IMR-90 (cell line): ENCODE measurements at regions of chr9 and their contacts with region 1.

Region 1: GRCh38 chr9:37209431-37210386 is 89.3 kb downstream of the ZCCHC7 start:
- DNase-seq: no peak
- ATAC-seq: no peak
- H3K4me3 ChIP-seq: no peak overlapping the region
- H3K27ac ChIP-seq: no peak overlapping the region
- H3K4me1 ChIP-seq: no peaks in the 10 kb centered on the region
- H3K27me3 ChIP-seq: no peaks in the 10 kb centered on the region
- CTCF ChIP-seq: no peak
- POLR2A ChIP-seq: no peak
- RAD21 ChIP-seq: no peak

Region 2: GRCh38 chr9:37251452-37251851 is 41.7 kb after region 1 on chr9:
- CTCF ChIA-PET with region 1: no interaction called
- POLR2A ChIA-PET with region 1: no interaction called
- dilution Hi-C with region 1: no loop called
- in situ Hi-C with region 1: no loop called
- intact Hi-C with region 1: loop called (anchors 10 kb)
- DNase-seq: no peak
- ATAC-seq: no peak
- H3K4me3 ChIP-seq: no peak overlapping the region
- H3K27ac ChIP-seq: no peak overlapping the region
- H3K4me1 ChIP-seq: no peaks in the 10 kb centered on the region
- H3K27me3 ChIP-seq: no peaks in the 10 kb centered on the region
- CTCF ChIP-seq: no peak
- POLR2A ChIP-seq: no peak
- RAD21 ChIP-seq: no peak

Region 3: GRCh38 chr9:37271679-37272078 is 62.0 kb after region 1 on chr9:
- CTCF ChIA-PET with region 1: no interaction called
- POLR2A ChIA-PET with region 1: no interaction called
- dilution Hi-C with region 1: no loop called
- in situ Hi-C with region 1: no loop called
- intact Hi-C with region 1: loop called (anchors 10 kb)
- DNase-seq: peak; percentile 11
- ATAC-seq: peak; percentile 59; the same call in 1 of the 2 replicates
- H3K4me3 ChIP-seq: no peak overlapping the region
- H3K27ac ChIP-seq: no peak overlapping the region
- H3K4me1 ChIP-seq: no peaks in the 10 kb centered on the region
- H3K27me3 ChIP-seq: no peaks in the 10 kb centered on the region
- CTCF ChIP-seq: no peak
- POLR2A ChIP-seq: no peak
- RAD21 ChIP-seq: no peak